PC-9 (cell line): ENCODE measurements at regions of chr4 and their contacts with region 1.

Region 1: DNA sequence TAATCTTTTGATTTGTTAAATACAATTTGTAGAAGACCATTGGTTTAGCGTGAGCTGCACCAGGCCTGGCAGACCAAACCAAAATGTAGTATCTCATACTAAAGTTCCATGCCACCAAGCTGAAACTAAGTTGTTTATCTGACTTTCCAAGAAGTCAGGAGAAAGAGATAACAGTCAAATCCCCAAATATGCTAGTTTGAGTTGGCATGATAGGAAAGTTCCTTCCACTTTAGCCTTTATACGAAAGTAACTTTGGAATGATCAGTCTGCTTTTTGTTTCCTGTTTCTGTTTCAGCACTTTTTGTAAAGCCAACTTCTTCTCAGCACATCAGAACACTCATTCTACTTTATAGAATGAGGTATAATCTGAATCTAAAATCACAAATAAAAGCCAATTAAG is 449.2 kb downstream of the GRXCR1 start:
- DNase-seq: no peak
- H3K4me3 ChIP-seq: no peak overlapping the region
- H3K27ac ChIP-seq: no peak overlapping the region
- H3K4me1 ChIP-seq: peaks cover 6% of the 10 kb centered on the region; the same call in 1 of the 2 replicates
- H3K27me3 ChIP-seq: no peaks in the 10 kb centered on the region
- CTCF ChIP-seq: no peak

Region 2: GRCh38 chr4:42371306-42372252 is 970.2 kb before region 1 on chr4:
- CTCF ChIA-PET with region 1: no interaction called
- POLR2A ChIA-PET with region 1: no interaction called
- intact Hi-C with region 1: no loop called
- DNase-seq: no peak
- H3K4me3 ChIP-seq: no peak overlapping the region
- H3K27ac ChIP-seq: no peak overlapping the region
- H3K4me1 ChIP-seq: no peaks in the 10 kb centered on the region
- H3K27me3 ChIP-seq: peaks cover 7% of the 10 kb centered on the region; the same call in 1 of the 2 replicates
- CTCF ChIP-seq: peak; percentile 56

Region 3: DNA sequence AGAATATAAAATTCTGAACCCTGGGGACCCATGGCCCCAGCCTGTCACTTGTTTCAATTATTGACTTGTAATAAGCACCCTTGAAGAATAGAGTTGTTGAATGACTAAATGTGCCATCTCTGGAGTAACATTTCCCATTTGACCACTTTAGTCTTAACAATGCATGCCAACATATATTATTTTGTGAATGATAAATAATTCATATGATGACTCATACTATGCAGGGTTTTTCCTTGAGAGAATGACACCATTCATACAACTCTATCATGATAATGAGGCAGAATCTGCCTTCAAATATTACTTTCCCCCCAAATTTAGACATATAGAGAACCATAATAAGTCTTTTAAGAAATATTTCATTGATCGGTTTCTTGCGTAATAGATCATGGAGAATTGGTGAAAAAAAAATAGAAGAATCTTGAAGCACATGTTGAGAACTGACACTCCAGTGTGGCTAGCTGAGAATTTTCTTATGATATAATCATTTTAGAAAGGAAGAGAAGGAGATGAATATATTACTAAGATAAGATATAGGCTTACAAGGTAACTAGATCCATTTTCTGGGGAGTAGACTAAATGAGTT is 44.7 kb before region 1 on chr4:
- CTCF ChIA-PET with region 1: no interaction called
- POLR2A ChIA-PET with region 1: interaction called, 15 read pairs
- intact Hi-C with region 1: no loop called
- DNase-seq: no peak
- H3K4me3 ChIP-seq: no peak overlapping the region
- H3K27ac ChIP-seq: no peak overlapping the region
- H3K4me1 ChIP-seq: no peaks in the 10 kb centered on the region
- H3K27me3 ChIP-seq: peaks cover 6% of the 10 kb centered on the region; the same call in 1 of the 2 replicates
- CTCF ChIP-seq: no peak